Heart right ventricle (tissue), 16 donors: ENCODE measurements at regions of chrX and their contacts with region 1.

Region 1: GRCh38 chrX:100381619-100382018 is 28.5 kb downstream of the PCDH19 start:
- DNase-seq: no peak
- ATAC-seq: no peak
- H3K4me3 ChIP-seq: no peak overlapping the region
- H3K27ac ChIP-seq: no peak overlapping the region
- H3K4me1 ChIP-seq: peaks cover 0 to 4% (median 0%) of the 10 kb centered on the region in 9 donors
- H3K27me3 ChIP-seq: peaks cover 0 to 44% (median 0%) of the 10 kb centered on the region in 7 donors
- CTCF ChIP-seq: no peak

Region 2: DNA sequence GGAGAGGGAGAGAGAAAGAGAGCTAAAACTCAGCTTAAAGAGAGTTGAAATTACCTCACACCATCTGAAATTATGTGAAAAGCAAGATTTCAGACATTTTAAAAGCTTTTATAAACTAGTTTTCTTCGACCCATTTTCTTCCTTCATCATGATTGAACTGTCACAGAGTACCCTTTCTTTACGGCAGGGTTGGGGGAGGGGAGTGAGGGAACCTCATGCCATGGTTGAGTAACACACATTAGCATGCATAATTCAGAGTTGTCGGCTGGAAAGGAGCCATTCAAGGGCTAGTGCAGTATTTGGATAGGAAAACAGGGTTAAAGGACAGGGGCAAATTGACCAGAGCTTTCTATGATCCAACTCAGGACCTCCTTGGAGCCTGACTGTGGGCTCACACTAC is 17.7 kb before region 1 on chrX:
- intact Hi-C with region 1: no loop called
- DNase-seq: no peak
- ATAC-seq: no peak
- H3K4me3 ChIP-seq: no peak overlapping the region
- H3K27ac ChIP-seq: no peak overlapping the region
- H3K4me1 ChIP-seq: no peaks in the 10 kb centered on the region
- H3K27me3 ChIP-seq: peaks cover 0 to 34% (median 0%) of the 10 kb centered on the region in 7 donors
- CTCF ChIP-seq: no peak

Region 3: GRCh38 chrX:100405424-100405823 is 23.8 kb after region 1 on chrX:
- intact Hi-C with region 1: loop called in 1 of 10 experiments (anchors 2 kb)
- DNase-seq: no peak
- ATAC-seq: no peak
- H3K4me3 ChIP-seq: no peak overlapping the region
- H3K27ac ChIP-seq: no peak overlapping the region
- H3K4me1 ChIP-seq: peaks cover 0 to 6% (median 0%) of the 10 kb centered on the region in 9 donors
- H3K27me3 ChIP-seq: peaks cover 0 to 85% (median 24%) of the 10 kb centered on the region in 7 donors
- CTCF ChIP-seq: no peak